Activated CD4-positive, alpha-beta memory T cell treated with anti-CD3 and anti-CD28 coated beads, Interleukin-2, amount 10 ng/mL, durations not matched to agents 7 days and 5 days (primary cell): ENCODE measurements at regions of chr11 and their contacts with region 1.

Region 1: DNA sequence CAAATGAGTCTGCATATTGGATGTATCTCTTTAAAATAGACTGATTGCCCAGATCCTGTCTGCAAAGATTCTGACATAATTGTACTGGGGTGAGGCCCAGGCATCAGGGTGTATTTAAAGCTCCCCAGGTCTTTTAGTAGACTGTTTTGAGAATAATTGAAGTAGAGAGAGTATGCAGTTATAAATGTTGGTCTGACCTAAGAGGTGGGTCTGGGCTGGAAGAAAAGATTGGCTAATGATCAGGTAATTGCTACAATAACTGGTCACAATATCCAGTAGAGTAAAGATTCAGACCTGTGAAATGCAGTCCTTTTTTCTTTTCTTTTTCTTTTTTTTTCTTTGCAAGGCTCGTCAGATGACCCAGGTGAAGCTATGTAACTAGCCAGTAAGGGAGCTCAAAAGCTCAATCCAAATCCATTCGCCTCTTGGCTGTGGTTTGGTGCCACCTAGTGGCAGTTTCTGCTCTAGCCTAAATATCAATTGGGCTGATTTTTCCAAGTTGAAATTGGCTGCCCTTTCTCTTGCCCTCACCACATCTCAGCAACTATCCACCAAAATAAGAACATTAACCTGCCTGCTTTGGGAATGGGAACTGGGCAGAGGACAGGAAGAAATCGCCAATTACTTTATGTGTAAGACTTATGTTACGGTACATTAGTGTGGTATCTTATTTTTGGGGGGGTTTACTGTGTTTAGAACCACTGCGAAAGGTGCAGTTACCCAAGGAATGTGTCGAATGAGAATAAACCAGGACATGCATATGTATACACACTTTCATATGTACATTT is 45.9 kb downstream of the ZNF143 start:
- DNase-seq: peak; percentile 78
- H3K4me3 Mint-ChIP-seq: no peak overlapping the region
- H3K27ac Mint-ChIP-seq: no peak overlapping the region
- H3K4me1 Mint-ChIP-seq: peaks cover 12% of the 10 kb centered on the region
- H3K27me3 Mint-ChIP-seq: no peaks in the 10 kb centered on the region

Region 2: DNA sequence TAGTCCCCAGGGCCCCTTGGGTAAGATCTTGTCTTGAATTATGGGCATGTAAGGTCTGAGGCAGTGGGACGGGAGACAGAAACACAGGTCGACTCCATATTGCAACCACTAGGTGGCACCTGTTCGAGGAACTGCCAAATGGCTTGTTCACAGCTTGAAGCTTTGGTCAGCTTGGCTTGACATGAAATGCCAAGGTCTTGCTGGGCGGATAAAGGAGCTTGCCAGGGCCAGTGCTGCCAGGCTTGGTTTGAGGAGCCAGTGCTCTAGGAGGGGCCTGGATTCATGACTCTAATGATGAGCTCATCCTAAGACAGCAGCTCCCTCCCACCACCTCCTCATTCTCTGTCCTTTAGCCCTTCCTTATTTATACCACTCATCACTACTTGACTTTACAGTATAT is 491.0 kb before region 1 on chr11:
- CTCF ChIA-PET with region 1: interaction called, 38 read pairs
- POLR2A ChIA-PET with region 1: no interaction called
- DNase-seq: peak; percentile 65
- H3K4me3 Mint-ChIP-seq: no peak overlapping the region
- H3K27ac Mint-ChIP-seq: no peak overlapping the region
- H3K4me1 Mint-ChIP-seq: peaks cover 24% of the 10 kb centered on the region
- H3K27me3 Mint-ChIP-seq: peaks cover 14% of the 10 kb centered on the region

Region 3: DNA sequence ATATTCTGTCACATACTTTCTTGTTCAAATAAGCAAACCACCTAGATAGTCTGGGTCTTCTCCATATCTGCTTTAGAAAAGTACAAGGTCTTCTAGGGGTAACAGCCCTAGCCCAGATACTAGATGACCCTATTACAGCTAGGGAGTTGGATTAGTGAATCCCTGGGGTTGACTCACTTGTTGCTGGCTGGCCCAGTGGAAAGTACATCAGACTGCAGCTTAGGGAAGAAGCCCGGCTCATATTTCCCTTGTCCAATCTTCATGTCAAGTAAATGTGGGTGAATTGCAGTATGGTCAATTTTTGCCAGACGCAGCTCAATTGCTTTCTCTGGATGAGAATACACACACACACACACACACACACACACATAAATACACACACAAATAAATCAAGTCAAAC is 336.2 kb before region 1 on chr11:
- CTCF ChIA-PET with region 1: interaction called, 71 read pairs
- POLR2A ChIA-PET with region 1: interaction called, 5 read pairs
- DNase-seq: no peak
- H3K4me3 Mint-ChIP-seq: no peak overlapping the region
- H3K27ac Mint-ChIP-seq: no peak overlapping the region
- H3K4me1 Mint-ChIP-seq: peaks cover 16% of the 10 kb centered on the region
- H3K27me3 Mint-ChIP-seq: no peaks in the 10 kb centered on the region

Region 4: GRCh38 chr11:9314291-9315036 is 192.2 kb before region 1 on chr11 and contains the start of gene TMEM41B:
- CTCF ChIA-PET with region 1: interaction called, 10 read pairs
- POLR2A ChIA-PET with region 1: interaction called, 3 read pairs
- DNase-seq: peak; percentile 99
- H3K4me3 Mint-ChIP-seq: peak within 1 kb of the TSS; percentile 92
- H3K27ac Mint-ChIP-seq: peak within 1 kb of the TSS; percentile 91
- H3K4me1 Mint-ChIP-seq: peaks cover 36% of the 10 kb centered on the region
- H3K27me3 Mint-ChIP-seq: peaks cover 21% of the 10 kb centered on the region
- total RNA-seq, gene TMEM41B: 43.3 to 49.0 TPM

Region 5: GRCh38 chr11:9438611-9439010 is 68.1 kb before region 1 on chr11:
- CTCF ChIA-PET with region 1: interaction called, 14 read pairs
- POLR2A ChIA-PET with region 1: no interaction called
- DNase-seq: no peak
- H3K4me3 Mint-ChIP-seq: no peak overlapping the region
- H3K27ac Mint-ChIP-seq: no peak overlapping the region
- H3K4me1 Mint-ChIP-seq: peaks cover 2% of the 10 kb centered on the region
- H3K27me3 Mint-ChIP-seq: no peaks in the 10 kb centered on the region

Region 6: GRCh38 chr11:9534791-9535781 is 28.4 kb after region 1 on chr11:
- CTCF ChIA-PET with region 1: interaction called, 20 read pairs
- POLR2A ChIA-PET with region 1: no interaction called
- DNase-seq: peak; percentile 80
- H3K4me3 Mint-ChIP-seq: no peak overlapping the region
- H3K27ac Mint-ChIP-seq: no peak overlapping the region
- H3K4me1 Mint-ChIP-seq: no peaks in the 10 kb centered on the region
- H3K27me3 Mint-ChIP-seq: no peaks in the 10 kb centered on the region